ENCODE measurements at regions of chr14 and their contacts with region 1.

Region 1: GRCh38 chr14:58297762-58298476 is 436 bp upstream of the ARID4A start:
- DNase-seq: peak; percentile 96 to 100 (median 97)
- ATAC-seq: peak; percentile 85
- H3K4me3 ChIP-seq: peak overlapping the region; percentile 81 to 85
- H3K4me3 Mint-ChIP-seq: no peak overlapping the region
- H3K27ac ChIP-seq: peak overlapping the region; percentile 94 to 97
- H3K27ac Mint-ChIP-seq: no peak overlapping the region
- H3K4me1 ChIP-seq: peaks cover 40% of the 10 kb centered on the region
- H3K4me1 Mint-ChIP-seq: peaks cover 61% of the 10 kb centered on the region
- H3K27me3 ChIP-seq: no peaks in the 10 kb centered on the region
- H3K27me3 Mint-ChIP-seq: no peaks in the 10 kb centered on the region
- CTCF ChIP-seq: no peak

Region 2: GRCh38 chr14:58239244-58240195 is 58.4 kb before region 1 on chr14:
- CTCF ChIA-PET with region 1: interaction called, 4 read pairs
- POLR2A ChIA-PET with region 1: interaction called, 47 read pairs
- intact Hi-C with region 1: loop called (anchors 1 kb)
- DNase-seq: peak; percentile 63 to 91 (median 83)
- ATAC-seq: peak; percentile 24
- H3K4me3 ChIP-seq: peak overlapping the region; percentile 57 to 81
- H3K4me3 Mint-ChIP-seq: no peak overlapping the region
- H3K27ac ChIP-seq: peak overlapping the region; percentile 59 to 77
- H3K27ac Mint-ChIP-seq: no peak overlapping the region
- H3K4me1 ChIP-seq: peaks cover 10% of the 10 kb centered on the region
- H3K4me1 Mint-ChIP-seq: peaks cover 22% of the 10 kb centered on the region
- H3K27me3 ChIP-seq: no peaks in the 10 kb centered on the region
- H3K27me3 Mint-ChIP-seq: no peaks in the 10 kb centered on the region
- CTCF ChIP-seq: no peak

Region 3: GRCh38 chr14:58258156-58258555 is 39.8 kb before region 1 on chr14:
- CTCF ChIA-PET with region 1: no interaction called
- POLR2A ChIA-PET with region 1: interaction called, 5 read pairs
- intact Hi-C with region 1: loop called in 1 of 2 experiments (anchors 5 kb)
- DNase-seq: no peak
- ATAC-seq: no peak
- H3K4me3 ChIP-seq: no peak overlapping the region
- H3K4me3 Mint-ChIP-seq: no peak overlapping the region
- H3K27ac ChIP-seq: no peak overlapping the region
- H3K27ac Mint-ChIP-seq: peak overlapping the region; percentile 60
- H3K4me1 ChIP-seq: no peaks in the 10 kb centered on the region
- H3K4me1 Mint-ChIP-seq: peaks cover 22% of the 10 kb centered on the region
- H3K27me3 ChIP-seq: no peaks in the 10 kb centered on the region
- H3K27me3 Mint-ChIP-seq: no peaks in the 10 kb centered on the region
- CTCF ChIP-seq: no peak

Region 4: GRCh38 chr14:58287607-58288042 is 10.3 kb before region 1 on chr14:
- CTCF ChIA-PET with region 1: no interaction called
- POLR2A ChIA-PET with region 1: interaction called, 11 read pairs
- intact Hi-C with region 1: loop called (anchors 1 to 2 kb)
- DNase-seq: no peak
- ATAC-seq: no peak
- H3K4me3 ChIP-seq: no peak overlapping the region
- H3K4me3 Mint-ChIP-seq: no peak overlapping the region
- H3K27ac ChIP-seq: no peak overlapping the region
- H3K27ac Mint-ChIP-seq: no peak overlapping the region
- H3K4me1 ChIP-seq: peaks cover 26% of the 10 kb centered on the region
- H3K4me1 Mint-ChIP-seq: peaks cover 74% of the 10 kb centered on the region
- H3K27me3 ChIP-seq: no peaks in the 10 kb centered on the region
- H3K27me3 Mint-ChIP-seq: no peaks in the 10 kb centered on the region
- CTCF ChIP-seq: no peak

Region 5: DNA sequence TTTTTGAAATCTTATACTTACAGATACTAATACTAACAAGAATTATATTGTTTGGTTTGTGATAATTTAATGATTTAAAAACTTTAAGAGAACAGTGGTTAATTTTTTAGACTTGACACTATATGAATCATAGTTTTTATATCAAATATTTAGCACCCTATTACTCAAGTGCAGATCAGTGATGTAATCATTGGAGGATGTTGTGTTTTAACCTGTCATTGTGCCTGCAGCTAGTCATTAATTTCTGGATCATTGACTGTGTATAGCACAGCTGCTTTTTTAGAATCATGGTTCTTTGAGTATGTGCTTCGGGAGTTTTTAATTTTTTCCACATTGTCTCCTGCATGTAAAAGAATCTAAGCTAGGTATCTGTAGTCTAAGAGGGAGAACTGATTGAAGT is 17.7 kb after region 1 on chr14:
- CTCF ChIA-PET with region 1: no interaction called
- POLR2A ChIA-PET with region 1: interaction called, 20 read pairs
- intact Hi-C with region 1: no loop called
- DNase-seq: no peak
- ATAC-seq: no peak
- H3K4me3 ChIP-seq: no peak overlapping the region
- H3K4me3 Mint-ChIP-seq: no peak overlapping the region
- H3K27ac ChIP-seq: no peak overlapping the region
- H3K27ac Mint-ChIP-seq: no peak overlapping the region
- H3K4me1 ChIP-seq: no peaks in the 10 kb centered on the region
- H3K4me1 Mint-ChIP-seq: peaks cover 9% of the 10 kb centered on the region
- H3K27me3 ChIP-seq: no peaks in the 10 kb centered on the region
- H3K27me3 Mint-ChIP-seq: no peaks in the 10 kb centered on the region
- CTCF ChIP-seq: no peak

Region 6: GRCh38 chr14:58395812-58396788 is 98.2 kb after region 1 on chr14 and contains the start of gene TOMM20L:
- CTCF ChIA-PET with region 1: no interaction called
- POLR2A ChIA-PET with region 1: interaction called, 11 read pairs
- intact Hi-C with region 1: no loop called
- DNase-seq: peak; percentile 48 to 86 (median 69)
- ATAC-seq: peak; percentile 81
- H3K4me3 ChIP-seq: peak within 1 kb of the TSS; percentile 27 to 59
- H3K4me3 Mint-ChIP-seq: peak within 1 kb of the TSS; percentile 84
- H3K27ac ChIP-seq: peak within 1 kb of the TSS; percentile 69 to 75
- H3K27ac Mint-ChIP-seq: peak within 1 kb of the TSS; percentile 93
- H3K4me1 ChIP-seq: peaks cover 9% of the 10 kb centered on the region
- H3K4me1 Mint-ChIP-seq: peaks cover 13% of the 10 kb centered on the region
- H3K27me3 ChIP-seq: no peaks in the 10 kb centered on the region
- H3K27me3 Mint-ChIP-seq: no peaks in the 10 kb centered on the region
- CTCF ChIP-seq: peak; percentile 94
- total RNA-seq, gene TOMM20L: 0.92 TPM in 1 of 2 experiments, not detected in the other

Measured in CD8-positive, alpha-beta T cell (primary cell).